ENCODE measurements at regions of chr3 and their contacts with region 1.

Region 1: DNA sequence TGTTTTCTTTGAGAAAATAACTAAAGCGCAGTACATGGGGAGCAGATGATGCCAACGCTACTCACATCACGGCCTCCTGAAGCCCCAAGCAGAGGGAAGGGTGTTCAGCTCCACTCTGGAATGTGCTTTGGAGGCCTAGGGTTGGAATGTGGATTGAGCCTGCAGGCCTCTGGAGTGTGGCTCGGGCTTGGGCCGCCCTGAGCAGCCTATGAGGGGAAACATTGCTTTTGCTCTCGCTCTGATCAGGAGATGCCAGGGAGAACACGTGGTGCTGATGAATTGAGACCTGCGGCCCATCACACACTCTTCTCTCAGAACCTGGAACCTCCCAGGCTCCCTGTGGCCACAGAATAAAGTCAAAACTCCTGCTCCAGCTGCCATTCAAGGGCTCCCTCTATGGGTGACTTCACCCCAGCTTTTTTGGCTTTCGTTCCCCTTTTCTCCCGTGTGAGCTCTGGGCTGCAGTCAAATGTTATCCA is 23.3 kb downstream of the CCDC13 start:
- DNase-seq: no peak
- H3K4me3 Mint-ChIP-seq: no peak overlapping the region
- H3K27ac Mint-ChIP-seq: no peak overlapping the region
- H3K4me1 Mint-ChIP-seq: no peaks in the 10 kb centered on the region
- H3K27me3 Mint-ChIP-seq: no peaks in the 10 kb centered on the region
- CTCF ChIP-seq: peak; percentile 21

Region 2: GRCh38 chr3:42572278-42572677 is 177.5 kb before region 1 on chr3:
- CTCF ChIA-PET with region 1: no interaction called
- intact Hi-C with region 1: loop called (anchors 10 kb)
- DNase-seq: peak; percentile 63
- H3K4me3 Mint-ChIP-seq: no peak overlapping the region
- H3K27ac Mint-ChIP-seq: no peak overlapping the region
- H3K4me1 Mint-ChIP-seq: no peaks in the 10 kb centered on the region
- H3K27me3 Mint-ChIP-seq: no peaks in the 10 kb centered on the region
- CTCF ChIP-seq: peak; percentile 33

Region 3: GRCh38 chr3:42652611-42653302 is 97.0 kb before region 1 on chr3:
- CTCF ChIA-PET with region 1: interaction called, 7 read pairs
- intact Hi-C with region 1: loop called (anchors 2 kb)
- DNase-seq: peak; percentile 73
- H3K4me3 Mint-ChIP-seq: peak overlapping the region; percentile 71
- H3K27ac Mint-ChIP-seq: peak overlapping the region; percentile 60
- H3K4me1 Mint-ChIP-seq: peaks cover 20% of the 10 kb centered on the region
- H3K27me3 Mint-ChIP-seq: no peaks in the 10 kb centered on the region
- CTCF ChIP-seq: no peak

Region 4: DNA sequence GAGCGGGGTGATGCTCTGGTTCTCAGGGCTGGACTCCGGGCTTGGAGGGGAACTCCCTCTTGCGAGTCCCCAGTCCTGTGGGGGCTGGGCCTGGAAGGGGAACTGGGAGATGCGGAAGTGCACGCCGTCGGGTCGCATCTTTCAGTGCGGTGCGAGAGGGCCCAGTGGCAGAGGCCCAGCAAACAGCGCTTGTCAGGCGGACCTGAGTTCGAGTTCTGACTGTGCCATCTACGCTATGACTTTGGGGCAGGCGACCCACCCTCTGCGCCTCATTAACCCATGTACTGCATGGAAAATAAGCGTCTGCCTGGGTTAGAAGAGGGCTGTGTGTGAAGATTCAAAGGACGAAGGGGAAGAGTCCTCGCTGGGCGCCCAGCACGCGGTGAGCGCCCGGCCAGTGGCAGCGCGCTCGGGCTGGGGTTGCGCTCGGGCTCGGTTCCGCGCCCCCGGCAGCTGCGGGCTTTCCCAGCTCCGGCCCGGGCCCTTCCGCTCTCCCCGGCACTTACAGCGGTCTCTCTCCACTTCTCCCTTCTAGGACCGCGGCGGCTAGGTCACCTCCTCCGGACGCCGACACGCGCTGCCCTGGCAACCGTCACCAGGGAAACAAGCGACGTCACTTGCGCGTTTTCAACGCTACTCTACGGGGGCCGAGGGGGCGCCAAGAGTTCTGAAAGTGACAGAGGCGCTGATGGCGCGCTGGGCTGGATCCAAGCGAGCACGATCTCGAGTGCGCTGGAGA is 23.0 kb after region 1 on chr3 and contains the start of gene CCDC13:
- CTCF ChIA-PET with region 1: no interaction called
- intact Hi-C with region 1: no loop called
- DNase-seq: peak; percentile 88
- H3K4me3 Mint-ChIP-seq: peak within 1 kb of the TSS; percentile 73
- H3K27ac Mint-ChIP-seq: peak within 1 kb of the TSS; percentile 78
- H3K4me1 Mint-ChIP-seq: peaks cover 5% of the 10 kb centered on the region
- H3K27me3 Mint-ChIP-seq: no peaks in the 10 kb centered on the region
- CTCF ChIP-seq: no peak
- total RNA-seq, gene CCDC13: 0.66 and 0.68 TPM in 2 replicates